ENCODE measurements at regions of chr5 and their contacts with region 1.

Region 1: DNA sequence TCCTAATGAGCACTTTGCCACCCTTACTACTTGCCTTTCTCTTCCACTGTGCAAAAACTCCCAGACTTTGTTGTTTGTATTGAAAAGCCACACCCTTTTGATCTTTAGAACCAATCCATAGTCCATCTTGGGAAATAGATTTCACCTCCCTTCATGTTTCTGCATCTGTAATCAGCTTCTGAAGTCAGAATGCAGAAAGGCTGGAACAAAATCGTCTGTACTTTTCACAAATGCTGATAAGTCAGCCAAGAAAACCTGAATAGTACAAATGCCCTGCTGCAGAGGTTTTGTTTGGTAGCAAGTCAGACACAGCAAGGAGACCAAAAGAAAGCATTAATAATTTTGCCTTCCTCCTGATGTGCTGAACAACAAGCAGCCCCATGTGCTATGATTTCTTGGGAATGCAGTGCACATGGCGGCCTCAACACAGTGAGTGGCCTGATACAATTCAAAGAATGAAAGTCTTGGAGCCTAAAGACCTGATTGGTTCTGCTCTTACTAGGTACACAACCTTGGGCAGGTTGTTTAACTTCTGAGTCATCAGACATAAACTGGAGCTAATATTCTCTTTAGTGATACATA is 59.2 kb upstream of the STK32A start:
- DNase-seq: no peak
- ATAC-seq: no peak
- H3K4me3 ChIP-seq: no peak overlapping the region
- H3K27ac ChIP-seq: no peak overlapping the region
- H3K4me1 ChIP-seq: no peaks in the 10 kb centered on the region
- H3K27me3 ChIP-seq: no peaks in the 10 kb centered on the region
- CTCF ChIP-seq: no peak

Region 2: GRCh38 chr5:146249801-146250200 is 925.8 kb before region 1 on chr5:
- intact Hi-C with region 1: no loop called
- DNase-seq: no peak
- ATAC-seq: no peak
- H3K4me3 ChIP-seq: no peak overlapping the region
- H3K27ac ChIP-seq: no peak overlapping the region
- H3K4me1 ChIP-seq: no peaks in the 10 kb centered on the region
- H3K27me3 ChIP-seq: no peaks in the 10 kb centered on the region
- CTCF ChIP-seq: no peak

Region 3: GRCh38 chr5:147203213-147203612 is 27.6 kb after region 1 on chr5:
- intact Hi-C with region 1: loop called in 1 of 2 experiments (anchors 2 kb)
- DNase-seq: no peak
- ATAC-seq: no peak
- H3K4me3 ChIP-seq: no peak overlapping the region
- H3K27ac ChIP-seq: no peak overlapping the region
- H3K4me1 ChIP-seq: no peaks in the 10 kb centered on the region
- H3K27me3 ChIP-seq: peaks cover 0 to 4% (median 0%) of the 10 kb centered on the region in 3 donors
- CTCF ChIP-seq: no peak

Measured in psoas muscle (tissue), 8 donors.